Calu3 (cell line): ENCODE measurements at regions of chr6 and their contacts with region 1.

Region 1: DNA sequence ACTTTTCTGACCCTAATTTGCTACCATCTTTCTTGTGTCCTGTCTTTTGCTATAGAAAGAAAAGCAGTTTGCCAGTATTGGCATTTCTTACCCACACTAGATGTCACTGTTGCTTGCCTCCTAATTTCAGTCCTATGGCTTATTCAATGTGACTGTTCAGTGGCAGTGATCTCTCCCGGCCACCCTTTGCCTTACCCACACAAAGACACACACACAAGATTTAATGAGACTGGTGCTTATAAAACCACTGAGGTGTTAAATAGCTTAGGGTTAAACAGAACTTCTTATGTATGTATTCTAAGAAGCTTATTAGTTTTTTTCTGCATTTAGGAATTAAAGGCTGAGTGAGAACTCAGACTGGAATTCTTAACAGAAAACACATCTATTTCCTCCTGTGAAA is 233.6 kb upstream of the ASCC3 start:
- DNase-seq: peak; percentile 26
- H3K4me3 Mint-ChIP-seq: no peak overlapping the region
- H3K27ac Mint-ChIP-seq: no peak overlapping the region
- H3K4me1 Mint-ChIP-seq: no peaks in the 10 kb centered on the region
- H3K27me3 Mint-ChIP-seq: no peaks in the 10 kb centered on the region
- CTCF ChIP-seq: no peak

Region 2: GRCh38 chr6:100775667-100776066 is 339.0 kb before region 1 on chr6:
- CTCF ChIA-PET with region 1: no interaction called
- intact Hi-C with region 1: loop called (anchors 10 kb)
- DNase-seq: no peak
- H3K4me3 Mint-ChIP-seq: no peak overlapping the region
- H3K27ac Mint-ChIP-seq: no peak overlapping the region
- H3K4me1 Mint-ChIP-seq: no peaks in the 10 kb centered on the region
- H3K27me3 Mint-ChIP-seq: no peaks in the 10 kb centered on the region
- CTCF ChIP-seq: no peak

Region 3: GRCh38 chr6:101296169-101296960 is 181.7 kb after region 1 on chr6:
- CTCF ChIA-PET with region 1: no interaction called
- intact Hi-C with region 1: no loop called
- DNase-seq: no peak
- H3K4me3 Mint-ChIP-seq: no peak overlapping the region
- H3K27ac Mint-ChIP-seq: no peak overlapping the region
- H3K4me1 Mint-ChIP-seq: no peaks in the 10 kb centered on the region
- H3K27me3 Mint-ChIP-seq: no peaks in the 10 kb centered on the region
- CTCF ChIP-seq: no peak

Region 4: GRCh38 chr6:101386982-101387381 is 272.3 kb after region 1 on chr6:
- CTCF ChIA-PET with region 1: no interaction called
- intact Hi-C with region 1: loop called (anchors 5 kb)
- DNase-seq: no peak
- H3K4me3 Mint-ChIP-seq: no peak overlapping the region
- H3K27ac Mint-ChIP-seq: no peak overlapping the region
- H3K4me1 Mint-ChIP-seq: no peaks in the 10 kb centered on the region
- H3K27me3 Mint-ChIP-seq: no peaks in the 10 kb centered on the region
- CTCF ChIP-seq: no peak

Region 5: DNA sequence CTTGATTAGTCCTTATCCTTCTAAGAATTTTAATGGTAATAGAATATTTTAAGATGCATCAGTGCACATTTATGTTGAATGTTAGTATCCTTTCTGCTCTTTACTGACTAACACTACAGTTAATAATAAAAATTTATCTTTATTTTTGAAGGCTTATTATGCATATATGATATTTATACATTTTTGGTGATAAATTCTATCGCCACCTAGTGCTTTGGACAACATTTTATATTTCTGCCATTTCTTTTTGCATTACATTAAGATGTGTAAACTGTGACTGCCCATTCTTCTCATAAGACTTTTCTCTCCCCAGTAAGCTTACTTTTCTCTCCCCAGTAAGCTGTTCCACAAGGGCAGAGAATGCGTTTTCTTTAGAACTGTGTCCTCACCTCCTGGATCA is 531.1 kb after region 1 on chr6:
- CTCF ChIA-PET with region 1: no interaction called
- intact Hi-C with region 1: loop called (anchors 1 kb)
- DNase-seq: no peak
- H3K4me3 Mint-ChIP-seq: no peak overlapping the region
- H3K27ac Mint-ChIP-seq: no peak overlapping the region
- H3K4me1 Mint-ChIP-seq: peaks cover 5% of the 10 kb centered on the region
- H3K27me3 Mint-ChIP-seq: no peaks in the 10 kb centered on the region
- CTCF ChIP-seq: no peak

Region 6: GRCh38 chr6:102619585-102619984 is 1504.9 kb after region 1 on chr6:
- CTCF ChIA-PET with region 1: no interaction called
- intact Hi-C with region 1: loop called (anchors 10 kb)
- DNase-seq: no peak
- H3K4me3 Mint-ChIP-seq: no peak overlapping the region
- H3K27ac Mint-ChIP-seq: no peak overlapping the region
- H3K4me1 Mint-ChIP-seq: no peaks in the 10 kb centered on the region
- H3K27me3 Mint-ChIP-seq: no peaks in the 10 kb centered on the region
- CTCF ChIP-seq: peak; percentile 31